Endothelial cell of umbilical vein (primary cell): ENCODE measurements at regions of chr3 and their contacts with region 1.

Region 1: DNA sequence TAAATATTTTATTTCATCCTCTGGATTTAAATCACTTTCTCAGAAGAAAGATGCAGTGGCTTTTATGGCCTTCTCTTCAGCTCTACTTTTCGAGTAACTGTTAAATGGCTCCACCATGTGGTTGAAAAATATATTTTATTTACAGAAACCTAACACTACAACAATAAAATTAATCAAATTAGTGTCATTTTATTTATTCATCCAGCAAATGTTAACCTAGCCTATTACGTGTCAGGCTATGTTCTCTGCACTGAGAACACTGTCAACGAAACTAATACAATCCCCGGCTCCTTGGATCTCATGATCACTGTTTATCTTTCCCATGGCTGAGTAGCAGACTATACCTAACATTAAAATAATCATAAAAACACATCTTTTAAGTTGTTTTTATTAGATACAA is 148.0 kb upstream of the OSTN start:
- DNase-seq: peak; percentile 27
- H3K4me3 ChIP-seq: no peak overlapping the region
- H3K27ac ChIP-seq: no peak overlapping the region
- H3K4me1 ChIP-seq: no peaks in the 10 kb centered on the region
- H3K27me3 ChIP-seq: no peaks in the 10 kb centered on the region
- CTCF ChIP-seq: peak in 1 of 2 donors; percentile 9
- POLR2A ChIP-seq: no peak

Region 2: DNA sequence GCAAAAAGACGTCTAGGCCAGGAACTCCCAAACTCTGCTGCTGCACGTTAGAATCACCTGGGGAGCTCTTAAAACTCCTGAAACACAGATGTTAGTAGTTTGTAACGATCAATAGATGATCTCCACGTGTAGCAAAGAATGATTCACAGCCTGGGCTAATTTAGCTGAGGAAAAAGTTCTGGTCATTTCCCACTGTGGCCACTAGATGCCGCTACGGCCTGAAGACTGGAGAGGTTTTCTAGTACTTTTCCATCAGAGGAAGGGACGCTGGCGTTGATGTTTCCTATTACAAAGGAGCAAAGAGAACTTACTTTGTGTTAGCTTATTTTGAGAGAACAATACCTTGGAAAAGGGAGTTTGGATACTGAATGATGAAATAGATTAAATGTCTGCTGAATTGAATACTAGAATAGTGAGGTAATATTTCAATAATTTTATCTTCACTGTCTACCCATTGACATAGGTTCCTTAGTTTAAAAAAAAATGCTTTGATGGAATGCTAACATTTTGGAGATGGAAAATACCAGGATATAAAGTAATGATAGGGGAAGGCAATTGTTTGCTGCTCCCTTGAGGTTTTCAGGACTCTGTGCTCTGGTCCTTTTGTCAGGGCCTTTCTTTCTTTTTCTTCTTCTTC is 1089.4 kb before region 1 on chr3:
- CTCF ChIA-PET with region 1: interaction called, 13 read pairs
- POLR2A ChIA-PET with region 1: no interaction called
- dilution Hi-C with region 1: no loop called
- intact Hi-C with region 1: loop called (anchors 5 kb)
- DNase-seq: peak; percentile 89
- H3K4me3 ChIP-seq: no peak overlapping the region
- H3K27ac ChIP-seq: no peak overlapping the region
- H3K4me1 ChIP-seq: no peaks in the 10 kb centered on the region
- H3K27me3 ChIP-seq: no peaks in the 10 kb centered on the region
- CTCF ChIP-seq: peak; percentile 77 to 90
- POLR2A ChIP-seq: no peak

Region 3: DNA sequence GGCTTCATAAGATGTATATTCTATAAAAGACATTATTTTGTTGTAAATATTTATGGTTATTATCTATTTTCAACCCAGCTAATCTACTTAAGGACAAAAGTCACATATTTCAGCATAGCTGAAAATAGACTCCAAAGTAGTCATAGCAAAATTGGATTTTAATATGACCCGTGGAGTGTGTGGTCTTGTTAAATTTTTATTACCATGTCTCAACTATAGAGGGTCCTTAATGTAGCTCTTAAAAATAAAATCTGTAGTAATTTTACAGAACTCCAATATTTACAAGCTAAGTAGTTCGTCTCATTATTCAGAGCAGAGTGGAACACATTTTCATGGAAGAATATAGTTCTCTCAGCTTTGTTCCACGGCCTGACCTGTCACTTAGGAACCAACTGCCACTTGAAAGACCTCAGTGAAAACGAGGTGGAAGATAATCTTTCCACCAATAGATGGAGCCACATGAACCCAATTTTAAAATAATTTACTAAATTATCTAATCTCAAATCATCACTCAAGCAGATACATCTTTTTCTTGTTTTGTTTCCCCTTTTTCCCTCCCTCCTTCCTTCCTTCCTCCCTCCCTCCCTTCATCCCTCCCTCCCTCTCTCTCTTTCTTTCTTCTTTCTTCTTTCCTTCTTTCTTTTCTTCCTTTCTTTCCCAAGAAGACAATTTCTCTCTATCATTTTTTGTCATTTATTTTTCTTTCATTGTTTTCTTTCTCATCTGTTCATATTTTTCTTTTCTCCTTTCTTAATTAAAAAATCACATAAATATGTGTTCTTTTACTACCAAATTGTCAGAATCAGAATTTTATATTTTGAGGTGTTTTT is 826.0 kb before region 1 on chr3:
- CTCF ChIA-PET with region 1: interaction called, 5 read pairs
- POLR2A ChIA-PET with region 1: no interaction called
- dilution Hi-C with region 1: no loop called
- intact Hi-C with region 1: loop called (anchors 5 kb)
- DNase-seq: peak; percentile 58
- H3K4me3 ChIP-seq: no peak overlapping the region
- H3K27ac ChIP-seq: no peak overlapping the region
- H3K4me1 ChIP-seq: peaks cover 10% of the 10 kb centered on the region
- H3K27me3 ChIP-seq: no peaks in the 10 kb centered on the region
- CTCF ChIP-seq: peak; percentile 20 to 24
- POLR2A ChIP-seq: no peak

Region 4: GRCh38 chr3:190701096-190701532 is 349.9 kb before region 1 on chr3:
- CTCF ChIA-PET with region 1: interaction called, 33 read pairs
- POLR2A ChIA-PET with region 1: no interaction called
- dilution Hi-C with region 1: no loop called
- intact Hi-C with region 1: loop called (anchors 5 kb)
- DNase-seq: peak; percentile 37
- H3K4me3 ChIP-seq: no peak overlapping the region
- H3K27ac ChIP-seq: no peak overlapping the region
- H3K4me1 ChIP-seq: no peaks in the 10 kb centered on the region
- H3K27me3 ChIP-seq: peaks cover 0 to 2% of the 10 kb centered on the region in 2 experiments
- CTCF ChIP-seq: peak; percentile 24 to 46
- POLR2A ChIP-seq: no peak

Region 5: GRCh38 chr3:190811775-190812480 is 239.1 kb before region 1 on chr3:
- CTCF ChIA-PET with region 1: interaction called, 37 read pairs
- POLR2A ChIA-PET with region 1: no interaction called
- dilution Hi-C with region 1: no loop called
- intact Hi-C with region 1: loop called (anchors 1 kb)
- DNase-seq: peak; percentile 33
- H3K4me3 ChIP-seq: no peak overlapping the region
- H3K27ac ChIP-seq: no peak overlapping the region
- H3K4me1 ChIP-seq: no peaks in the 10 kb centered on the region
- H3K27me3 ChIP-seq: no peaks in the 10 kb centered on the region
- CTCF ChIP-seq: peak; percentile 16 to 53
- POLR2A ChIP-seq: no peak

Region 6: DNA sequence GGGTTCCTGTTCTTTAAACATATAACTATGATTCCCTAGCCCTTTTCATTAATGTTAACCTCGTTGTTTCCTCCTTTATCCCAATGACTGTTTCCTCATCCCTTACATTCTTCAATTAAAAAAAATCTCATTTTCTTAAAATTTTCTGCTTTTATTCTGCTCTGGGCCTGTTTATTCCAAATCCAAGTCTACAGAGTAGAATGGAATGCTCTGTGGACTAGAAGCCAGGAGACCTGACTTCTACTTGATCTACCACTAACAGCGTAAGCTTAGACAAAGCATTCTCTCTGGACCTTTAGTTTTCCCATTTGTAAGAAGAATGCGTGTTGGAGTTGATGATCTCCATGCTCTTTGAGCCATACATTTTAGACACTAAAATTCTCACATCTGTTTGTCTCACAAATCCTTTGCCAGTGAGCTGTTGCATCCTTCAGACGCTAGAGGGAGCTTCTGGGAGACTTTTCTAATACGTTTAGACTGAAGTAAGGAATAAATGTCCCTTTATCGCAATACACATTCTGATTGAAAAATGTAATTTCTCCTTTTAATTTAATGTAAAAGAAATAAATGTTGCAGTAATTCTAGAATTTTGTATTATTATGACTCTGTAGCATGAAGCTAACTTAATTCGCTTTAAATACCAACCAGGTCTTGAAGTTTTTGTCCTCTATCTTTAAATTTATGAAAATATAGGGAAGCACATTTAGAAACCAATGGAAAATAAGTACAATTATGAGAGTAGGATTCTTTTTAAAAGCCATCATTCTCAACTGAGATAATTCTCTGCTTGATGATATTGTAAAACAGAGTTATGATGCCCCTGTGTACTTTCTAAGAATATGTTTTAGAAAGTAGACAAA is 166.8 kb before region 1 on chr3:
- CTCF ChIA-PET with region 1: interaction called, 120 read pairs
- POLR2A ChIA-PET with region 1: no interaction called
- dilution Hi-C with region 1: no loop called
- intact Hi-C with region 1: loop called (anchors 1 kb)
- DNase-seq: peak; percentile 64
- H3K4me3 ChIP-seq: no peak overlapping the region
- H3K27ac ChIP-seq: no peak overlapping the region
- H3K4me1 ChIP-seq: no peaks in the 10 kb centered on the region
- H3K27me3 ChIP-seq: no peaks in the 10 kb centered on the region
- CTCF ChIP-seq: peak; percentile 77 to 78
- POLR2A ChIP-seq: no peak

Region 7: DNA sequence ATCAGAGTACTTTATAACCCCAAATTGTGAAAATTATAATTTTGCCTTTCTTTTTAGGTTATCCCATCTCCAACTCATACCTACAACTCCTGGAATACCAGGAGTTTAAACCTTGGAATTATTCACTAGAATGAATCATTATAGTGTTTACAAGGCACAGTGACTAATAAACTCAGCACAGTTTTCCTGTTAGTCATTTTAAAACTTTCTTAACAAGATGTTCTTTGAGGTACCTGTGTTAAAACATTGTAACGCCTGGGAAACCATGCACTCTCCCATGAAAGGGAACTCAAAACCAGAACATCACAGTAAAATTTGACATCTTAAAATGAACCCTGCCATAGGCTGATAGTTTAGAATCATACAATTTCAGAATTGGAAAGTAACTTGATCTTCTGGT is 15.6 kb after region 1 on chr3:
- CTCF ChIA-PET with region 1: interaction called, 23 read pairs
- POLR2A ChIA-PET with region 1: no interaction called
- dilution Hi-C with region 1: no loop called
- intact Hi-C with region 1: no loop called
- DNase-seq: peak; percentile 29
- H3K4me3 ChIP-seq: no peak overlapping the region
- H3K27ac ChIP-seq: no peak overlapping the region
- H3K4me1 ChIP-seq: peaks cover 10% of the 10 kb centered on the region
- H3K27me3 ChIP-seq: no peaks in the 10 kb centered on the region
- CTCF ChIP-seq: no peak
- POLR2A ChIP-seq: no peak